ENCODE measurements at regions of chr7 and their contacts with region 1.

Region 1: GRCh38 chr7:1532483-1533424 is 2.3 kb downstream of the MAFK start:
- DNase-seq: peak; percentile 93
- H3K4me3 ChIP-seq: peak overlapping the region; percentile 56 to 80 (median 74)
- H3K27ac ChIP-seq: peak overlapping the region; percentile 95 to 100 (median 98)
- H3K4me1 ChIP-seq: peaks cover 0 to 65% (median 51%) of the 10 kb centered on the region in 4 donors
- H3K27me3 ChIP-seq: no peaks in the 10 kb centered on the region
- CTCF ChIP-seq: no peak
- EP300 ChIP-seq: no peak
- POLR2A ChIP-seq: peak; percentile 29 to 32

Region 2: DNA sequence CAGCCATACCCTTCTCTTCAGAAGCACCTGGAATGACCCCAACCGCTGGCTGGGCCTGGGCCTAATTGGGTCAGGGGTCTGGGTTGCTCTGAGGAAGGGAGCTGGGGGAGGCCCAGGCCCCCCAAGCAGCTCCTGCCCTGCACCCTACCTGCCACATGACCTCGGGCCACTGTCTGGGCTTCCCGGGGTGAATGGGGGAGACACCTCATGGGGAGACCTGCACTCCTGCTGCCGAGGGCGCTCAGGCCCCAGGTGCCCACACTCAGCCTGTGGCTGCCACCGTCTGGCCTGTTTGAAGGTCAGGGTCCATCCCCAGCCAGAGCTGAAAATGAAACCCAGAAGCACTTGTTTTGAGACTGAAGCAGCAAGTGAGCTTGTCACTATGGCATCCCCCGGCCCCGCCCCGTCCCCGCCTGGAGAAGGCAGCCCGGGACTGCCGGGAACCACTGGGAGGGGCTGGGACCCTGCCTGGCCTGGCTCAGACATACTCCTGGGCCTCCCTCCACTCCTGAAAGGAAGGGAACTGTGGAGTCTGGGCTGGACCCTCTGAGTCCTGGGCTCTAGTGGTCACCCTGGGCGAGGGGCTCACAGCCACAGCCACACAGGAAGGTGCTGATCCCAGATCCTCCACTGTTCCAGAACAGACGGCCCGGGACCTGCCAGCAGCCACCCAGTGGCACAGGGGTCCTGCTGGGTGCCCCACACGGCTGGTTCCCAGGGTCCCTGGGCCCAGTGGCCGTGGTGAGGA is 66.1 kb before region 1 on chr7:
- intact Hi-C with region 1: loop called (anchors 2 kb)
- DNase-seq: peak; percentile 91
- H3K4me3 ChIP-seq: peak overlapping the region in 1 of 4 donors; percentile 16
- H3K27ac ChIP-seq: peak overlapping the region; percentile 74 to 86 (median 84)
- H3K4me1 ChIP-seq: peaks cover 2 to 54% (median 49%) of the 10 kb centered on the region in 4 donors
- H3K27me3 ChIP-seq: no peaks in the 10 kb centered on the region
- CTCF ChIP-seq: no peak
- EP300 ChIP-seq: no peak
- POLR2A ChIP-seq: no peak

Region 3: GRCh38 chr7:1503816-1504775 is 28.7 kb before region 1 on chr7 and contains the start of gene INTS1:
- intact Hi-C with region 1: loop called (anchors 2 kb)
- DNase-seq: peak; percentile 94
- H3K4me3 ChIP-seq: peak within 1 kb of the TSS; percentile 80 to 100 (median 96)
- H3K27ac ChIP-seq: peak within 1 kb of the TSS; percentile 58 to 76 (median 68)
- H3K4me1 ChIP-seq: peaks cover 0 to 31% (median 27%) of the 10 kb centered on the region in 4 donors
- H3K27me3 ChIP-seq: no peaks in the 10 kb centered on the region
- CTCF ChIP-seq: peak; percentile 15 to 92 (median 44)
- EP300 ChIP-seq: no peak
- POLR2A ChIP-seq: peak; percentile 24 to 36
- total RNA-seq, gene INTS1: 18.9 to 35.7 (median 26.2) TPM

Region 4: DNA sequence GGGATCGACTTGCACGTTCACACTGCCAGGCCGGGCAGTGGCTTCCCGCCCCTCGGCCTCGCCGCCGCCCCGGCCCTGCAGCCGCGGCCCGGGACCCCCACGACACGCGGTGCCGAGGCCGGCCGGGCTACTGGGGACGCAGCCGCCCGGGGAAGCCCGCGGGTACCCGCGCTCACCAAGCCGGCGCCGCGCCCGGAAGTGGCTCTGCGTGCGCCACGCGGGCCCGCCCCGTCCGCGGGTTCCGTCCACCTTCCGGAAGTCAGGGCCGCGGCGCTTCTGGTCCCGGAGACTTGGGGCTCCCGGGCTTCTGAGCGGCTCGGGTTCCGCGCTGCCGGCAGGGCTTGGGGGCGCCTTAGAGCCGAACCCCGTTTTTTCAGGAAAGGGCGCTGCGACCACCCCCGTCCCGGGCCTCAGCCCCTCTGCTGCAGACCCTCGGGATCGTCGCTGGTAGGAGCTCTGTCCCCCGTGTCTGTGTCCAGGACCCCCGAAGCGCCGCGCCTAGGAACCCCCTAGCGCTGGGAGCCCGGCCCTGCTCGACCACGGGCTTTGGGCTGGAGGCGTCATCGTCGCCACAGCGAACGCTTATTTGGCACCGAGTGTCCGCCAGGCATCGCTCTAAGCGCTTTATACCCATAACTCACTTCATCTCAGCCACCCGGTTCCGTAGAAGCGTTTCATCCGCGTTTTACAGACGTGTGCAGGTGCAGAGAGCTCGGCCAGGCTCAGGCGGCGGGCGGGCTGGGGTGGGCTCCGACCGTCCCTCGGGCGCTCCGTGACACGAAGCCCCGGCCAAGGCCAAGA is 37.3 kb after region 1 on chr7 and contains the start of gene PSMG3:
- intact Hi-C with region 1: loop called (anchors 1 kb)
- DNase-seq: peak; percentile 96
- H3K4me3 ChIP-seq: peak within 1 kb of the TSS; percentile 65 to 91 (median 78)
- H3K27ac ChIP-seq: peak within 1 kb of the TSS; percentile 90 to 95 (median 92)
- H3K4me1 ChIP-seq: peaks cover 0 to 37% (median 29%) of the 10 kb centered on the region in 4 donors
- H3K27me3 ChIP-seq: no peaks in the 10 kb centered on the region
- CTCF ChIP-seq: peak; percentile 30 to 59 (median 35)
- EP300 ChIP-seq: no peak
- POLR2A ChIP-seq: peak; percentile 57 to 69
- total RNA-seq, gene PSMG3: 23.3 to 52.8 (median 41.6) TPM

Region 5: DNA sequence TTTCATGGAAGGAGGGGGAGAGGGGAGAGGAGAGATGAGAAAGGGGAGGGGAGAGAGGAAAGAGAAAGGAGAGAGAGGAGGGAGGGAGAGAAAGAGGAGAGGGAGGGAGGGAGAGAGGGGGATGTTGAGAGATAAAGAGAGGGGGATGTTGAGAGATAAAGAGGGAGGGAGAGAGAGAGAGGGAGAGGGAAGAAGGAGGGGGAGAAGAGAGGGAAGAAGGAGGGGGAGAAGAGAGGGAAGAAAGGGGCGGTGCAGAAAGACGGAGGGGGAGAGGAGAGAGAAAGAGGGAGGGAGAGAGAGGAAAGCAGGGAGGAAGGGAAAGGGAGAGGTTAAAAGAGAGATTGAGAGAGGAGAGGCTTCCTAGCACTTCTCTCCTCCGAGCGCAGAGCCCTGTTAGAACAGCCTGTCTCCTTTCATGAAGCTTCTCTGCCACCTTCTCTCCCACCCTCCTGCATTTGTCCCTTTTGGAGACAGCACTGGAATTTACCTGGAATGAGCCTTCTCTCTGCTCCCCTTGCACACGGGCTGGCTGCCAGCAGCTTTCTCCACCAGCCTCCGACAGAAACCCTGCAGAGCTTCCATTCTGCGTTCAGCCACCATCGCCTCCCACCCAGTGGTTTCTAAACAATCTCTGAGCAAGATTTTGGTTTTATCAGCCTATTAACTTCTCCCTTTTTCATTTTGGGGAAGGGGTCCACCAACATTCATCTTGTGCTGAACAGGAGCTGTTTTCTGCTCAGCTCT is 1584.9 kb after region 1 on chr7:
- intact Hi-C with region 1: no loop called
- DNase-seq: no peak
- H3K4me3 ChIP-seq: no peak overlapping the region
- H3K27ac ChIP-seq: no peak overlapping the region
- H3K4me1 ChIP-seq: no peaks in the 10 kb centered on the region
- H3K27me3 ChIP-seq: peaks cover 0 to 17% (median 0%) of the 10 kb centered on the region in 3 donors
- CTCF ChIP-seq: no peak
- EP300 ChIP-seq: no peak
- POLR2A ChIP-seq: no peak

Measured in sigmoid colon (tissue), 7 donors.